Activated CD8-positive, alpha-beta T cell treated with anti-CD3 and anti-CD28 coated beads for 36 hours (primary cell): ENCODE measurements at regions of chr12 and their contacts with region 1.

Region 1: DNA sequence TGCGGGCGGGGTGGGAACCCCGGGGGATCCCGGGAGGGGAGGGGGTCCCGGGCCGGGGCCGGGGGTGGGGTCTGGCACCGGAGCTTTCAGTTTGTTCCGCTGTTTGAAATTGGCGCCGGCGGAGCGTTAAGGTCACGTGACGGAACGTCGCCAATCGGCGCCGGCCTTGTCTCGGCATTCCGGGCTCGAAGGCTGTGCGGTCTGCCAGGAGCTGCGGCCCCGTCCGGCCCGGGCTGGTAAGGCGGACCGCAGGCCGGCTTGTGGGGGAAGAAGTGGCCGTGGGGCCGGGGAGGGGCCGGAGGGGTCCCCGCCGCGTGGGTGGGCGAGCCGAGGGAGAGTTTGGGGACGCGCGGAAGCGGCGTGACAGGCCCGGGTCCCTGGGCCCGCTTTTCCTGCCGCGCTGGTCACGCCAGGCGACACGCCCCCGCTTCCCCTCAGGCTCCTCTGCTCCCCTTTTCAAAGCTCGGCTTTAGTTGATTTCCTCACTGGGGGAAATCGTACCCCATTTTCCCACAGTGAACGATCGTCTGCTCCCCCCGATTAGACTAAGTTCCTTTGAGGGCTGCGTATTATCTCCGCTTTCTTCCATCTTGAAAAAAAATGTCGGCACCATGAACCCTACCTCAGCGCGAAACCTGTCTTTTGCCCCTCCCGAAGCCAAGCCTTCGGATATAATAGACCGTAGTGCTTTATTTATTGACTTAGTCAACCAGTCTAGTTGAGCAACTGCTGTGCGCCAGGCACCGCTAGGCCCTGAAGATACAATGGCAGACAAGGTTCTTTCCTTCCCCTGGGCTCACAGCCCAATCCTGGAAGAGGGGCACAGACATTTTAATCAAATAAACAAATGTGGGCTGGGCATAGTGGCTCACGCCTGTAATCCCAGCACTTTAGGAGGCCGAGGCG is at the starts of genes FOXM1 and RHNO1:
- DNase-seq: peak; percentile 89
- ATAC-seq: peak; percentile 73
- H3K4me3 Mint-ChIP-seq: peak within 1 kb of the TSS; percentile 80
- H3K27ac Mint-ChIP-seq: peak within 1 kb of the TSS; percentile 98
- H3K4me1 Mint-ChIP-seq: peaks cover 31% of the 10 kb centered on the region
- H3K27me3 Mint-ChIP-seq: no peaks in the 10 kb centered on the region
- CTCF ChIP-seq: no peak
- total RNA-seq, gene FOXM1: 64.4 to 64.8 TPM
- total RNA-seq, gene RHNO1: 56.9 to 62.9 TPM

Region 2: DNA sequence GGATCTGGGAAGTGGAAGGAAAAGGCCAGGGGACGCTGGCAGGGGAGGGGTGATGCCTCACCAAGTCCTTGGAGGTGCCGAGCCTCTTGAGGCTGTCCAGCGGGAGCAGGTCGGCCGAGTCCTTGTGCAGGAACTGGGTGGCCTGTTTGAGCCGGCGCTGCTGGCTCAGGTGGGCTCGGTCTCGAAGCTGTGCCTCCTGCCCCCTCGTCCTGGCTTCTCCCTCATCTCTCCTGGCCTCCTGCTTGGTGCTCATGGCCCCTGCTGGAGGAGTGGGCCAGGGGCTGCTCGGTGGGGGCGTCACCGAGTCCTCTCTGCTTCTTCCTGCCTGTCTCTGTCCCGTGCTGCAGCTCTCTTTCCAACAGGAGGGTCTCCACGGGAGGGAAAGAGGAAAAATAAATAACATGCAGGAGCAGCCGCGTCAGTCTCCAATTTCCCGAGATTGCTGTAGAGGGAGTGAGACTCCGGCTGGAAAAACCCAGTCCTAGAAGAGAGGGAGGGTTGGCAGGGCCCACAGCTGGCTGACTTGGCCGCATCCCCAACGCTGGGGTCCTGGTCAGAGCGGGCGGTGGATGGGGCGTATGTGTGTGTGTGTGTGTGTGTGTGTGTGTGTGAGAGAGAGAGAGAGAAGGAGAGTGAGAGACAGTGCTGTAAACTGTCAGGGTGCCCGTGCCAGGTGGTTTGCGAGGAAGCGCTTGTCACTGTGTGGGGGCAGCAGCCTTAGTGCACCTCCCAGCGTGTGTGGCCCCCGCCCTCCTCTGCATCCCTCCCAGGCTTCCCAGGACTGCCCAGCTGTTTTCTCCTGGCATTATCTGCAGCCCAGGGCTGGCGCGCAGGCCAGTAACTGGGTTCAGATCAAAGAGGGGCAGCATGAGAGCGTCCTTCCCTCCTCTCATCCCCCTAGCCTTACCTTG is 42.5 kb before region 1 on chr12 and contains the start of gene NRIP2:
- CTCF ChIA-PET with region 1: no interaction called
- POLR2A ChIA-PET with region 1: no interaction called
- intact Hi-C with region 1: no loop called
- DNase-seq: no peak
- ATAC-seq: no peak
- H3K4me3 Mint-ChIP-seq: no peak within 1 kb of the TSS
- H3K27ac Mint-ChIP-seq: no peak within 1 kb of the TSS
- H3K4me1 Mint-ChIP-seq: peaks cover 16% of the 10 kb centered on the region
- H3K27me3 Mint-ChIP-seq: no peaks in the 10 kb centered on the region
- CTCF ChIP-seq: no peak
- total RNA-seq, gene NRIP2: not detected

Region 3: GRCh38 chr12:2858944-2859421 is 18.3 kb before region 1 on chr12:
- CTCF ChIA-PET with region 1: interaction called, 4 read pairs
- POLR2A ChIA-PET with region 1: interaction called, 10 read pairs
- intact Hi-C with region 1: no loop called
- DNase-seq: no peak
- ATAC-seq: no peak
- H3K4me3 Mint-ChIP-seq: no peak overlapping the region
- H3K27ac Mint-ChIP-seq: no peak overlapping the region
- H3K4me1 Mint-ChIP-seq: no peaks in the 10 kb centered on the region
- H3K27me3 Mint-ChIP-seq: no peaks in the 10 kb centered on the region
- CTCF ChIP-seq: no peak

Region 4: GRCh38 chr12:2864198-2864597 is 13.1 kb before region 1 on chr12:
- CTCF ChIA-PET with region 1: no interaction called
- POLR2A ChIA-PET with region 1: interaction called, 10 read pairs
- intact Hi-C with region 1: no loop called
- DNase-seq: no peak
- ATAC-seq: no peak
- H3K4me3 Mint-ChIP-seq: no peak overlapping the region
- H3K27ac Mint-ChIP-seq: no peak overlapping the region
- H3K4me1 Mint-ChIP-seq: peaks cover 10% of the 10 kb centered on the region
- H3K27me3 Mint-ChIP-seq: no peaks in the 10 kb centered on the region
- CTCF ChIP-seq: no peak

Region 5: DNA sequence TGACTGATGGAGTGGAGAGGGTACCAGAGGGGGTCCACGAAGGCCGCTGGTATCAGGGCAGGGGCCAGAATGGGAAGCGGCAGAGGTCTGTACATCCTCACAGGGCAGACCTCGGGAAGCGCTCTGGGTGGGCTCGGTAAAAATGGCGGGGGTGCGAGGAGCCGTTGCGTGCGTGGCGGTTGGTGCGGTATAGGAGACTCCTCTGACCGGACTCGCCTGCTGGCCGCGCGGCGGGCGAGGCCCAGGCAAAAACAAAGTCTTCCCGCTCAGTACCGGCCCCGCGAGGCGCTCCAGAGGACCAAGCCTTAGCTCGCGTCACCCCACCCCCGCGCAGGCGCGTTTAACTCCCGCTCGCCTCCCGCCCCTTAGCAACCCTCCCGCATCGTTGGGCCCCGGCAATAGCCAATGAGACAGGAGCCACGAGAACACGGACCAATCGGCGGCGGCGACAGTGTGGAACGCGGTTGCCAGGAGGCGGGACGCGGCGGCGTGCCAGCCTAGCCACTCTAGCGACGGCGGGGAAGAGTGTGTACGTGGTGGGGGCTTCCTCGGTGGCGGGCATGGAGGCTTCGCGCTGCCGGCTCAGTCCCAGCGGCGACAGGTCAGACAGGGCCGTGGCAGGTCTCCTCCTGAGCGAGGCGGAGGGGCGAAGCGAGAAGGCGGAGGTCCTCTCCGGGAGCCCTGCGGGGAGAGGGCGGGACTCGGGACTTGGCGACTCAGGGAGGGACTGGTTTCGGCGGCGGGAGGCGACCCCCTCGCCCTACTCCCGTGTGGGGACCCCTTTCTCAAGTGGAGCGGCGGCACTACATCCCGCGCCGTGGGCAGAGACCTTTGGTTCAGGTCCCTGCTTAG is 13.3 kb after region 1 on chr12 and contains the start of gene TULP3:
- CTCF ChIA-PET with region 1: interaction called, 9 read pairs
- POLR2A ChIA-PET with region 1: interaction called, 48 read pairs
- intact Hi-C with region 1: no loop called
- DNase-seq: peak; percentile 98
- ATAC-seq: peak; percentile 97
- H3K4me3 Mint-ChIP-seq: peak within 1 kb of the TSS; percentile 95
- H3K27ac Mint-ChIP-seq: peak within 1 kb of the TSS; percentile 79
- H3K4me1 Mint-ChIP-seq: peaks cover 32% of the 10 kb centered on the region
- H3K27me3 Mint-ChIP-seq: no peaks in the 10 kb centered on the region
- CTCF ChIP-seq: no peak
- total RNA-seq, gene TULP3: 5.6 to 6.0 TPM